ENCODE measurements at regions of chr5 and their contacts with region 1.

Region 1: DNA sequence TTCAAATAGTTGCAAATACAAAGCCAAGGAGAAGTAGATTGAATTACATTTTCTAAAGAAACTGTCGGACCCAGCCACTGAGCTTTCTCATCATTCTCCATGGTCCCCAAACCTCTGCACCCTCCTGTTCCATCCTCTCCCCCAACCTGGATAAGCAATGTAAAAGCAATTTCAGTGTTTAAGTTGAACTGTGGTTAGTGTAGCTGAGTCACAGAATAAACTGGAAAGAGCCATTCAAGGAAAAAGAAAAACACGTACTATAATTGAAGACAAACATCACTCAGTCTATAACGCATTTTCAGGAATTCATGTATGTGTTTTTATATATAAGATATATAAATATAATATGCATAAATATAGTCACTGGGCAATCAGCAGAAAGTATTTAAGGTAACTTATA is 54.1 kb upstream of the TMEM161B start:
- DNase-seq: no peak
- H3K4me3 ChIP-seq: no peak overlapping the region
- H3K27ac ChIP-seq: no peak overlapping the region
- H3K4me1 ChIP-seq: no peaks in the 10 kb centered on the region
- H3K27me3 ChIP-seq: no peaks in the 10 kb centered on the region
- CTCF ChIP-seq: no peak
- POLR2A ChIP-seq: no peak

Region 2: GRCh38 chr5:88226881-88227450 is 95.8 kb before region 1 on chr5:
- intact Hi-C with region 1: loop called (anchors 10 kb)
- DNase-seq: no peak
- H3K4me3 ChIP-seq: no peak overlapping the region
- H3K27ac ChIP-seq: no peak overlapping the region
- H3K4me1 ChIP-seq: no peaks in the 10 kb centered on the region
- H3K27me3 ChIP-seq: no peaks in the 10 kb centered on the region
- CTCF ChIP-seq: no peak
- POLR2A ChIP-seq: no peak

Measured in breast epithelium (tissue), 4 donors.